ENCODE measurements at regions of chr1 and their contacts with region 1.

Region 1: GRCh38 chr1:248858891-248859889 is at the start of gene ZNF692:
- DNase-seq: peak; percentile 94 to 99
- ATAC-seq: peak; percentile 81 to 90
- H3K4me3 ChIP-seq: peak within 1 kb of the TSS; percentile 77
- H3K27ac ChIP-seq: peak within 1 kb of the TSS; percentile 96 to 99
- H3K4me1 ChIP-seq: peaks cover 23% of the 10 kb centered on the region
- CTCF ChIP-seq: no peak; the same call in 2 of the 3 replicates
- EP300 ChIP-seq: no peak
- POLR2A ChIP-seq: peak; percentile 91
- RAD21 ChIP-seq: no peak
- polyA plus RNA-seq, gene ZNF692: 19.8 and 28.2 TPM in 2 replicates

Region 2: GRCh38 chr1:248825909-248826760 is 33.1 kb before region 1 on chr1 and contains the start of gene SH3BP5L:
- CTCF ChIA-PET with region 1: interaction called, 16 read pairs
- POLR2A ChIA-PET with region 1: interaction called, 9 read pairs
- DNase-seq: peak; percentile 97 to 98
- ATAC-seq: peak; percentile 91 to 96
- H3K4me3 ChIP-seq: peak within 1 kb of the TSS; percentile 84
- H3K27ac ChIP-seq: peak within 1 kb of the TSS; percentile 96 to 97
- H3K4me1 ChIP-seq: peaks cover 59% of the 10 kb centered on the region
- CTCF ChIP-seq: peak; percentile 76
- EP300 ChIP-seq: no peak
- POLR2A ChIP-seq: peak; percentile 46
- RAD21 ChIP-seq: peak; percentile 44 to 48; a peak in 4 of 5 replicates
- polyA plus RNA-seq, gene SH3BP5L: 10.9 and 12.1 TPM in 2 replicates

Region 3: GRCh38 chr1:248837794-248838356 is 21.3 kb before region 1 on chr1 and contains the start of gene ZNF672:
- CTCF ChIA-PET with region 1: interaction called, 46 read pairs
- POLR2A ChIA-PET with region 1: interaction called, 53 read pairs
- DNase-seq: peak; percentile 90 to 97
- ATAC-seq: peak; percentile 90 to 95
- H3K4me3 ChIP-seq: peak within 1 kb of the TSS; percentile 88
- H3K27ac ChIP-seq: peak within 1 kb of the TSS; percentile 94 to 95
- H3K4me1 ChIP-seq: peaks cover 10% of the 10 kb centered on the region; the same call in 2 of the 3 replicates
- CTCF ChIP-seq: no peak
- EP300 ChIP-seq: no peak
- POLR2A ChIP-seq: peak; percentile 87
- RAD21 ChIP-seq: no peak
- polyA plus RNA-seq, gene ZNF672: 20.4 and 20.6 TPM in 2 replicates

Region 4: GRCh38 chr1:248847181-248847955 is 11.8 kb before region 1 on chr1:
- CTCF ChIA-PET with region 1: interaction called, 46 read pairs
- POLR2A ChIA-PET with region 1: interaction called, 3 read pairs
- DNase-seq: no peak
- ATAC-seq: no peak
- H3K4me3 ChIP-seq: no peak overlapping the region
- H3K27ac ChIP-seq: no peak overlapping the region
- H3K4me1 ChIP-seq: no peaks in the 10 kb centered on the region
- CTCF ChIP-seq: no peak
- EP300 ChIP-seq: no peak
- POLR2A ChIP-seq: no peak
- RAD21 ChIP-seq: no peak

Region 5: DNA sequence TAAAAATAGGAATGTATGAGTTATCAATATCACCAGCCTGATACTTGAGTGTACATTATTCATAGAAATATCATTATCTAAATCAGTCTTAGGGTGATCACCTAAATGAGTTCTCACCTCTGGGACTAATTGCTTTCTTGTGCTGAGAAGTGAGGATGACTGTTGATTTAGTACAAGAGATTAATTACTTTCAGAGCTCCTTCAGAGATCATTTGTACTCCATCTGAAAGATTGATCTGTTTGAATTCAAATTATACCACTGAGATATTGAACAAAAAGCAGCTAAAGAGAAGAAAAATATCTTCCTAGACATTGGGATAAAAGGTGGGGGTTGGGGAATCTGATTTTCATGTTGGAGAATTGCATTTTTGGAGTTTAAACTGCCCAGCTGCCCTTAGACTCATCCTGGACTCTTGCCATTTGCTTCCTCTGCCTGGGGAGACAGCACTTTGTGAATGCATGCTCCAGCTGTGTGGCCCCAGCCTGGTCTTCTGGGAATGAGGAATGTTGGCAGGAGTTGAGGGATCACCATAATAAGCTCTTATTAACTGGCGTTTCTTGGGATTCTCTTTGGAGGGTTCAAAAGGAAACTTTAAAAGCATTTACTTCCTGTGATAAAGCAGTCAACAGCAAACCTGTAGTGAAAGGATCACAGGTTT is 27.2 kb after region 1 on chr1:
- CTCF ChIA-PET with region 1: no interaction called
- POLR2A ChIA-PET with region 1: no interaction called
- DNase-seq: no peak
- ATAC-seq: no peak
- H3K4me3 ChIP-seq: no peak overlapping the region
- H3K27ac ChIP-seq: no peak overlapping the region
- H3K4me1 ChIP-seq: no peaks in the 10 kb centered on the region
- CTCF ChIP-seq: no peak
- EP300 ChIP-seq: no peak
- POLR2A ChIP-seq: no peak
- RAD21 ChIP-seq: no peak

Region 6: DNA sequence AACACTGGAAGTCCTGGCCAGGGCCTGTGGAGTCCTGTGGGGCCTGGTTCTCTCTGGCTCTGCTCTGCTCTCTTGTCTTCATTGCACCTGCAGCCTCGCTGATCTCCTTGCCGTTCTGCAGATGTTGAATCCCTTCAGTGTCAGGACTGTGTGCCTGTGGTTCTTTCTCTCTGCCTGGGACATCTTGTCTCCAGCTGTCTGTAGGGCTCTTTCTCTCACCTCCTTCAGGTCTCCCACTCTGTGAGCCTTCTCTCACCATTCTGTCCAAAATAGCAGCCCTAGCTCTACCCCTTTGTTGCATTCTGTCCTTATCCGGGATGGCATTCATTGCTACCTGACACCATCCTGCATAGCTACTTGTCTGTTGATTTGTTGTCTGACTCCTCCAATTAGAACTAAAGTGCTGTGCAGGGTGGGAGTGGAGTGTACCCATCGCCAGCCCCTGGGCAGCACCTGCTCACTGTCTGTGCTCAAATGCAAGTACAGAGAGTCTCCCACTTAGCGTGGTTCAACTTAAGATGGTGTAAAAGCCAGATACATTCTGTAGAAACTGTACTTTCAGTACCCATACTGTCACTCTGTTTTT is 55.7 kb after region 1 on chr1:
- CTCF ChIA-PET with region 1: interaction called, 10 read pairs
- POLR2A ChIA-PET with region 1: no interaction called
- DNase-seq: no peak
- ATAC-seq: no peak
- H3K4me3 ChIP-seq: no peak overlapping the region
- H3K27ac ChIP-seq: no peak overlapping the region
- H3K4me1 ChIP-seq: no peaks in the 10 kb centered on the region
- CTCF ChIP-seq: no peak
- EP300 ChIP-seq: no peak
- POLR2A ChIP-seq: no peak
- RAD21 ChIP-seq: no peak

Measured in A549 (cell line).